ENCODE measurements at regions of chr1 and their contacts with region 1.

Region 1: GRCh38 chr1:43367904-43368645 is at the start of gene ELOVL1:
- DNase-seq: peak; percentile 85
- H3K4me3 Mint-ChIP-seq: peak within 1 kb of the TSS; percentile 92
- H3K27ac Mint-ChIP-seq: peak within 1 kb of the TSS; percentile 86
- H3K4me1 Mint-ChIP-seq: peaks cover 43% of the 10 kb centered on the region
- H3K27me3 Mint-ChIP-seq: no peaks in the 10 kb centered on the region
- total RNA-seq, gene ELOVL1: 81.8 and 85.7 TPM in 2 replicates

Region 2: GRCh38 chr1:42924082-42924850 is 443.8 kb before region 1 on chr1:
- intact Hi-C with region 1: loop called (anchors 5 kb)
- DNase-seq: peak; percentile 91
- H3K4me3 Mint-ChIP-seq: peak overlapping the region; percentile 90
- H3K27ac Mint-ChIP-seq: peak overlapping the region; percentile 96
- H3K4me1 Mint-ChIP-seq: peaks cover 50% of the 10 kb centered on the region
- H3K27me3 Mint-ChIP-seq: no peaks in the 10 kb centered on the region

Region 3: DNA sequence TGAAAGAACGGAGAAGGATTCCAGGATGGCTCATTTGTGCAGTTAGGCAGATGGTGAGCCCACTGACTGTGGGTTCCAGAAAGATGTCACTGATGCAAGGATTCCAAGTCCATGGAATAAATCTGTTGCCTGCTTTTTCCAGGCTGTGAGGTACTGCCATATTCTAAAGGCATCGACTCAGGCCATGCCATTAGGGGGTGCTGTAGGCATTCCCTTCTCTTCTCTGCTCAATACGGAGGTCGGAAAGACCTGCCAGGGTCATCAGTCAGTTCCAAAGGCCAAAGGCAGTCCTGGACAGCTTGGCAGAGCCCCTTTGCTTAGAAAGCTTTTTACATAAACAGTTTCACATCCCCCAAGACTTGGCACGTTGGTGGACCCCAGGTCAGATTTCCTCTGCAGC is 130.0 kb before region 1 on chr1:
- intact Hi-C with region 1: loop called (anchors 1 kb)
- DNase-seq: peak; percentile 13
- H3K4me3 Mint-ChIP-seq: no peak overlapping the region
- H3K27ac Mint-ChIP-seq: peak overlapping the region; percentile 30
- H3K4me1 Mint-ChIP-seq: peaks cover 17% of the 10 kb centered on the region
- H3K27me3 Mint-ChIP-seq: peaks cover 2% of the 10 kb centered on the region

Region 4: GRCh38 chr1:43293896-43294760 is 73.9 kb before region 1 on chr1:
- intact Hi-C with region 1: loop called (anchors 1 kb)
- DNase-seq: no peak
- H3K4me3 Mint-ChIP-seq: no peak overlapping the region
- H3K27ac Mint-ChIP-seq: peak overlapping the region; percentile 73
- H3K4me1 Mint-ChIP-seq: peaks cover 22% of the 10 kb centered on the region
- H3K27me3 Mint-ChIP-seq: no peaks in the 10 kb centered on the region

Region 5: DNA sequence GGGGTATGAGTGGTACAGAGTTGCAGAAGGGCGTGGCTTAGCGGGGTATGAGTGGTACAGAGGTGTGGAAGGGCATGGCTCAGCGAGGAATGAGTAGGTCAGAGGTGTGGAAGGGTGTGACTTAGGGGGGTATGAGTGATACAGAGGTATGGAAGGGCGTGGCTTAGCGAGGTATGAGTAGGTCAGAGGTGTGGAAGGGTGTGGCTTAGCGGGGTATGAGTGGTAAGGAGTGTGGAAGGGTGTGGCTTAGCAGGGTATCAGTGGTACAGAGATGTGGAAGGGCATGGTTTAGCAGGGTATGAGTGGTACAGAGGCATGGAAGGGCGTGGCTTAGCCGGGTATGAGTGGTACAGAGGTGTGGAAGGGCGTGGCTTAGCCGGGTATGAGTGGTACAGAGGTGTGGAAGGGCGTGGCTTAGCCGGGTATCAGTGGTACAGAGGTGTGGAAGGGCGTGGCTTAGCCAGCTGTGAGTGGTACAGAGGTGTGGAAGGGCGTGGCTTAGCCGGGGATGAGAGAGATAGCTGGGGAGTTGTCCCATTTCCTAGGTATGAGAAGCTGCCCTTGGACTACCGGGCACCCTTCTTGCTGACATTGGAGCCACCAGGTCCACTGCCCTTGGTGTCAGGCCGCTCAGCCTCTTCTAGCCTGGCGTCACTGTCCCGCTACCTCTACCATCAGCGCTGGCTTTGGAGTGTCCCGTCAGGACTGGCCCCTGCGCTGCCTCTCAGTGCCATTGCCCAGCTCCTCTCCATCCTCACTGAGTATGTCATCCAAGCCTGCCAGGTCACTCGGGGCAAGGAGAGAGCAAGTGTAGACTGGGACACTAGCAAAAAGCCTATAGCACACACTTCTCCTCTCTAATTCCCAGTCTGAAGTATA is 55.8 kb after region 1 on chr1:
- intact Hi-C with region 1: no loop called
- DNase-seq: no peak
- H3K4me3 Mint-ChIP-seq: no peak overlapping the region
- H3K27ac Mint-ChIP-seq: no peak overlapping the region
- H3K4me1 Mint-ChIP-seq: peaks cover 10% of the 10 kb centered on the region
- H3K27me3 Mint-ChIP-seq: no peaks in the 10 kb centered on the region

Region 6: GRCh38 chr1:43454266-43455011 is 86.4 kb after region 1 on chr1:
- intact Hi-C with region 1: loop called (anchors 1 kb)
- DNase-seq: peak; percentile 61
- H3K4me3 Mint-ChIP-seq: peak overlapping the region; percentile 84
- H3K27ac Mint-ChIP-seq: peak overlapping the region; percentile 79
- H3K4me1 Mint-ChIP-seq: peaks cover 18% of the 10 kb centered on the region
- H3K27me3 Mint-ChIP-seq: peaks cover 28% of the 10 kb centered on the region

Region 7: DNA sequence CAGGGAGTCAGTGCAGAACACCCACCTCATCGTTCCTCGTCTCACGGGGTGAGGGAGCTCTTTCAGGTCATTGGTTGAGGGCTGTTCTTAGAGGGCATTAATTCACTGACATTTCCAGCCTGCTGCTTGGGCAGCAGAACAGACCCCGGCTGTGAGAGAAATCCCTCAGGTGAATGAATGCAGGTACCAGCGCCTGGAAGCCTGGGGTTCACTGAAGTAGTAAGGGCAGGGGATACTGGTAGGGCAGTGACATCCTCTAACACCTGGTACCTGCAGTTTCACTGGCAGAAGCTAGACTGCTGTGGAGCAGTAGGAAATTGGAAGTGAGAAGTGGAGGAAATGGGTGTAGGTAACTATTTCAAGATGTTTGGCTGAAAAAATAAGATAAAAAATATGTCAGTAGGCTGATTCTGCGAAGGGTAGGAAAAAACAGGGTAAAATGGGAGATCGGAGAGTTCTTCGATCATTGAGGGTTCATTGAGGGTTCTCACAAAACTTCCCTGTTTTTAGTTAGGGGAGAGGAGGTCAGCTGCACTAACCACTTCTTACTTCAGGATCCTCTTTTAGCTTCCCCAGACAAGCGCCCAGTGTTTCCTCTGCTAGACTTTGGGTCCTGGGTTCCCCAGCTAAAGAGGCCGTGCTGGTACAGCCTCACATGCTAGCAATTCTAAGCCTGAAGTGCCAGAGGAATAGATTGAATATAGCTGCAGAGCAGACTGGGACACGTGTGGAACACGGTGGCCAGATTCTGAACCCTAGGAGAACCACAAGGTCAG is 1092.2 kb after region 1 on chr1:
- intact Hi-C with region 1: no loop called
- DNase-seq: no peak
- H3K4me3 Mint-ChIP-seq: no peak overlapping the region
- H3K27ac Mint-ChIP-seq: no peak overlapping the region
- H3K4me1 Mint-ChIP-seq: no peaks in the 10 kb centered on the region
- H3K27me3 Mint-ChIP-seq: peaks cover 22% of the 10 kb centered on the region